Activated CD8-positive, alpha-beta T cell treated with anti-CD3 and anti-CD28 coated beads for 36 hours (primary cell): ENCODE measurements at regions of chr6 and their contacts with region 1.

Region 1: GRCh38 chr6:88982720-88983119 is 19.3 kb upstream of the RNGTT start:
- DNase-seq: peak; percentile 40
- ATAC-seq: peak; percentile 95
- H3K4me3 Mint-ChIP-seq: no peak overlapping the region
- H3K27ac Mint-ChIP-seq: no peak overlapping the region
- H3K4me1 Mint-ChIP-seq: peaks cover 2% of the 10 kb centered on the region
- H3K27me3 Mint-ChIP-seq: no peaks in the 10 kb centered on the region
- CTCF ChIP-seq: peak; percentile 73

Region 2: GRCh38 chr6:88997327-88997726 is 14.6 kb after region 1 on chr6:
- CTCF ChIA-PET with region 1: interaction called, 18 read pairs
- POLR2A ChIA-PET with region 1: interaction called, 3 read pairs
- intact Hi-C with region 1: no loop called
- DNase-seq: no peak
- ATAC-seq: no peak
- H3K4me3 Mint-ChIP-seq: no peak overlapping the region
- H3K27ac Mint-ChIP-seq: no peak overlapping the region
- H3K4me1 Mint-ChIP-seq: no peaks in the 10 kb centered on the region
- H3K27me3 Mint-ChIP-seq: peaks cover 2% of the 10 kb centered on the region
- CTCF ChIP-seq: no peak

Region 3: GRCh38 chr6:89073014-89073620 is 90.4 kb after region 1 on chr6:
- CTCF ChIA-PET with region 1: interaction called, 16 read pairs
- POLR2A ChIA-PET with region 1: no interaction called
- intact Hi-C with region 1: loop called (anchors 5 kb)
- DNase-seq: no peak
- ATAC-seq: no peak
- H3K4me3 Mint-ChIP-seq: no peak overlapping the region
- H3K27ac Mint-ChIP-seq: no peak overlapping the region
- H3K4me1 Mint-ChIP-seq: peaks cover 3% of the 10 kb centered on the region
- H3K27me3 Mint-ChIP-seq: no peaks in the 10 kb centered on the region
- CTCF ChIP-seq: no peak

Region 4: DNA sequence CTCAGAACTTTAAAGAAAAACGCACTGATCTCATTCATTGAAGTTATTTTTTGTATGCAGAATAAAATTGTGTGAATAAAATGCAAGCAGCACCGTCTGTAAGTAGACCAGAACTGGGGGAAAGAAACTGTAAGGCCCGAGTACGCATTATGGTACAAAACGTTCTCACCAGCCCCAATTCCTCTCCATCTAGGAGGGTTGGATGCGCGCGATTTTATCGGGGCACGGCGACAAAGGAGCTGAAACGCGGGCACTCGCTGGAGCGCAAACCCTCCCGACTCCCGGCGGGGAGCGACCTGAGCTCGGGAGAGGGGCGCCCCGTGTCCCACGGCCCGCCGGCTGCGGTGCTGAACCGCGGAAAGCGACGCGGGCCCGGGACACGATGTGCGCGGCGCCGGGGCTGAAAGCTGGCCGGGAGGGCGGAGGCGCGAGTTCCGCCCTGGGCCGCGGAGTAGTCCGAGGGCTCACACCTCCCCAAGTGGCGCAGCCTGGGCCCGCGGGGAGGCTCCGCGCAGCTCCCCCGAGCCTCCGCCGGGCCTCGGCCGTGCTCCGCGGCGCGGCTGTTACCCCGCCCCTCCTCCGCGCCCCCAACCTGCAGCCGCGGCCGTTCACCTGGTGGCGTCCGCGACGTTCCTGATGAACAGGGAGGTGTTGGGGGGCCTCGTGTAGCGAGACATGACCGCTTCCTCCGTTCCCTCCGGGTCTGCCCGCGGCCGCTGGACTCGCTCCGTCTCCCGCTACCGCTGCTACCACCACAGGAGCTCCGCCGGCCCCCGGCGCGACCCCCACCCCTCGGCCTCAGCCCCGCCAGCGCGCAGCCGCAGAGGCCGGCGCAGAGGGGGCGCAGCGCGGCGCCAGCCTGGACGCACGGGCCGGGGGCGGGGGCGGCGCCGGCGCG is 134.7 kb after region 1 on chr6 and contains the start of gene SRSF12:
- CTCF ChIA-PET with region 1: interaction called, 10 read pairs
- POLR2A ChIA-PET with region 1: no interaction called
- intact Hi-C with region 1: no loop called
- DNase-seq: peak; percentile 43
- ATAC-seq: peak; percentile 88
- H3K4me3 Mint-ChIP-seq: peak within 1 kb of the TSS; percentile 86
- H3K27ac Mint-ChIP-seq: peak within 1 kb of the TSS; percentile 38
- H3K4me1 Mint-ChIP-seq: peaks cover 5% of the 10 kb centered on the region
- H3K27me3 Mint-ChIP-seq: peaks cover 9% of the 10 kb centered on the region
- CTCF ChIP-seq: no peak
- total RNA-seq, gene SRSF12: 0.83 to 1.1 TPM

Region 5: DNA sequence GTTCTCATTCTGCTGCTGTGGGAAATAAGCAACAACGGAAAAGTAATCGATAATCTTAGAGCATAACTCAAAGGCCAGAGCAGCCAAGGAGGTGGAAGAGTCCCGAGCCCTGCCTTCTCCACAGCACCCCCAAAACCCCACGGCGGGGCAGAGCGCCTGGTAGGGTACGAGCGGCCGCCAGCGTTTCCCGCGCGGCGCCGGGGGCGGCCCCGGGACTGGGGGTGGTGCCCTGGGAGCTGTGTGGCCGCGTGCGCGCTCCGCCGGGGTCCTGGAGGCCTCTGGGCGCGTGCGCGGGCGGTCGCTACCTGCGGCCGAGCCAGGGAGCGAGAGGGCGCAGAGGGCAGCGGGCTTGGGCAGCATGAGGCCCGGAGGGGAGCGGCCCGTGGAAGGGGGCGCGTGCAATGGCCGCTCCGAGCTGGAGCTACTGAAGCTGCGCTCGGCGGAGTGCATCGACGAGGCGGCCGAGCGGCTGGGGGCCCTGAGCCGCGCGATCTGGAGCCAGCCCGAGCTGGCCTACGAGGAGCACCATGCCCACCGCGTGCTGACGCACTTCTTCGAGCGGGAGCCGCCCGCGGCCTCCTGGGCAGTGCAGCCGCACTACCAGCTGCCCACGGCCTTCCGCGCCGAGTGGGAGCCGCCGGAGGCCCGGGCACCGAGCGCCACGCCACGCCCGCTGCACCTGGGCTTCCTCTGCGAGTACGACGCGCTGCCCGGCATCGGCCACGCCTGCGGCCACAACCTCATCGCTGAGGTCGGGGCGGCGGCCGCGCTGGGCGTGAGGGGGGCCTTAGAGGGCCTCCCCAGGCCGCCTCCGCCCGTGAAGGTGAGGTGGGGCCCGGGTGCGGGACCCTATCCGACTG is 163.3 kb after region 1 on chr6 and contains the start of gene PM20D2:
- CTCF ChIA-PET with region 1: interaction called, 22 read pairs
- POLR2A ChIA-PET with region 1: interaction called, 4 read pairs
- intact Hi-C with region 1: loop called (anchors 10 kb)
- DNase-seq: peak; percentile 79
- ATAC-seq: peak; percentile 82
- H3K4me3 Mint-ChIP-seq: peak within 1 kb of the TSS; percentile 88
- H3K27ac Mint-ChIP-seq: peak within 1 kb of the TSS; percentile 98
- H3K4me1 Mint-ChIP-seq: peaks cover 33% of the 10 kb centered on the region
- H3K27me3 Mint-ChIP-seq: peaks cover 2% of the 10 kb centered on the region
- CTCF ChIP-seq: no peak
- total RNA-seq, gene PM20D2: 25.4 to 26.0 TPM

Region 6: GRCh38 chr6:89270951-89271721 is 288.4 kb after region 1 on chr6:
- CTCF ChIA-PET with region 1: interaction called, 11 read pairs
- POLR2A ChIA-PET with region 1: no interaction called
- intact Hi-C with region 1: no loop called
- DNase-seq: no peak
- ATAC-seq: no peak
- H3K4me3 Mint-ChIP-seq: no peak overlapping the region
- H3K27ac Mint-ChIP-seq: no peak overlapping the region
- H3K4me1 Mint-ChIP-seq: no peaks in the 10 kb centered on the region
- H3K27me3 Mint-ChIP-seq: no peaks in the 10 kb centered on the region
- CTCF ChIP-seq: no peak